ENCODE measurements at regions of chr1 and their contacts with region 1.

Region 1: GRCh38 chr1:178031856-178032320 is 62.0 kb upstream of the RASAL2 start:
- DNase-seq: peak; percentile 74
- H3K4me3 ChIP-seq: no peak overlapping the region
- CTCF ChIP-seq: peak; percentile 83

Region 2: GRCh38 chr1:177984136-177984525 is 47.8 kb before region 1 on chr1:
- CTCF ChIA-PET with region 1: interaction called, 12 read pairs
- POLR2A ChIA-PET with region 1: no interaction called
- DNase-seq: peak; percentile 87
- H3K4me3 ChIP-seq: peak overlapping the region; percentile 55
- CTCF ChIP-seq: no peak

Region 3: DNA sequence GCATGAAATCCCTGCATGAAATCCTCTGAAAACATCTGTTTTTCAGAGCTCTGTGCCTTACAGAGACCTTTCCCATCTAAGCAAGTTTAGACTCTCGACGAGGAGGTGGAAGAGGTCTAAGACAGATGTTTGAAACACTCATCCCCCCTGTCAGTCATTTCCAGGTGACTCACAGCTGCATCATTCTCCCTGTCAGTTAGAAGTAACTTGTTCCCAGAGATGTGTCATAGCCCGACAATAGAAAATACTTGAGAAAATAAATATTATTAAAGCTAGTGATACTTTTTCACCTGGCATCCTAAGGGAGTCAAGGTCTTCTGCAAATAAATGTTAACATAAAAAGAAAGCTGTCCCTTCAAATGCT is 20.4 kb before region 1 on chr1:
- CTCF ChIA-PET with region 1: interaction called, 117 read pairs
- POLR2A ChIA-PET with region 1: no interaction called
- DNase-seq: no peak
- H3K4me3 ChIP-seq: no peak overlapping the region
- CTCF ChIP-seq: no peak

Region 4: DNA sequence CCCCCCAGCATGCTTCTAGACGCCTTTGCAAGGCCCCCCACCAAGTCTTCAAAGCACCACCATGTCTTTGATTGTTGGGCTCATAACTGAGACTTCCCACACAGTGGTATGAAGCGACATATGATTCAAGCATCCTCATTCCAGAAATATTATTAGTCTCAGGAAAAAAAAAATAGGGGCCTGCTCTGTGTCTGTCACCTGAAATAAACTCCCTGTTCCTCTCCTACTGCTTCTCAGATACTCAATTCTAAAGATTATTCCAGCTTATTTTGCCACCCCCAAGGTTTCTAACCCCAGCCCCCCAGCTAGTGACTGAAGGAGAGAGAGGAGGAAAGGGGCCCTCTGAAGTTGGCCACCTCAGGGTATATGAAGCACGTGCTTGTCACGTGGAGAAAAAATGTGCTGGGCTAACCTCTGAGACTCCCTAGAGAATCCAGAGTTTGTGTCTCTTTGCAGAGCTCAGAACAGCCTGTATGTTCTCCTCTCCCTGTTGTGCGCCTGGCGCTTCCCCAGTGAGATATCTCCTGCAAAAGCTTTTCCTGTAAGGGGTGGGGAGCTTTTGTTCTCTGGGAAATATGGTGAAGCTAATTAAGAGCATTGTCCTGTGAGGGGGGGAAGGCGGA is 26.1 kb after region 1 on chr1:
- CTCF ChIA-PET with region 1: interaction called, 97 read pairs
- POLR2A ChIA-PET with region 1: no interaction called
- DNase-seq: peak; percentile 50
- H3K4me3 ChIP-seq: no peak overlapping the region
- CTCF ChIP-seq: no peak

Region 5: GRCh38 chr1:178238722-178239510 is 207.0 kb after region 1 on chr1:
- CTCF ChIA-PET with region 1: interaction called, 18 read pairs
- POLR2A ChIA-PET with region 1: no interaction called
- DNase-seq: peak; percentile 97
- H3K4me3 ChIP-seq: no peak overlapping the region
- CTCF ChIP-seq: no peak

Region 6: DNA sequence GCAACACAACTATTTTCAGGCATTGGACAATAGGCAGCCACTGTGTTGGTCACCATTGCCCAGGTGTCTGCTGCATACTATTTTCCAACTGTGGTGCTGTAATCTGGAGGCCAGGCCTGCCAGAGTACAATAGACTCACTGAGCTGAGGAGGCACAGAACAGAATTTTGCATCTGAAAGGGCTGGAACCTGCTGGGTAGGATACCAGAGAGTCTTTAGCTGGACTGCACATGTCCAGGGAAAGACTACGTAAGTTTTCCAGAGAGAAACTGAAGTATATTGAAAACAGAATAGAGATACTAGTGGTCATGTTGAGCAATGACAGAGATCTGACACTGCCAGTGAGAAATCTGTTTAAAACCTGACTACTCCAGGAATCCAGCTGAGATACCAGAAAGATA is 262.8 kb after region 1 on chr1:
- CTCF ChIA-PET with region 1: interaction called, 24 read pairs
- POLR2A ChIA-PET with region 1: no interaction called
- DNase-seq: no peak
- H3K4me3 ChIP-seq: no peak overlapping the region
- CTCF ChIP-seq: no peak